Sigmoid colon (tissue), 7 donors: ENCODE measurements at regions of chr1 and their contacts with region 1.

Region 1: DNA sequence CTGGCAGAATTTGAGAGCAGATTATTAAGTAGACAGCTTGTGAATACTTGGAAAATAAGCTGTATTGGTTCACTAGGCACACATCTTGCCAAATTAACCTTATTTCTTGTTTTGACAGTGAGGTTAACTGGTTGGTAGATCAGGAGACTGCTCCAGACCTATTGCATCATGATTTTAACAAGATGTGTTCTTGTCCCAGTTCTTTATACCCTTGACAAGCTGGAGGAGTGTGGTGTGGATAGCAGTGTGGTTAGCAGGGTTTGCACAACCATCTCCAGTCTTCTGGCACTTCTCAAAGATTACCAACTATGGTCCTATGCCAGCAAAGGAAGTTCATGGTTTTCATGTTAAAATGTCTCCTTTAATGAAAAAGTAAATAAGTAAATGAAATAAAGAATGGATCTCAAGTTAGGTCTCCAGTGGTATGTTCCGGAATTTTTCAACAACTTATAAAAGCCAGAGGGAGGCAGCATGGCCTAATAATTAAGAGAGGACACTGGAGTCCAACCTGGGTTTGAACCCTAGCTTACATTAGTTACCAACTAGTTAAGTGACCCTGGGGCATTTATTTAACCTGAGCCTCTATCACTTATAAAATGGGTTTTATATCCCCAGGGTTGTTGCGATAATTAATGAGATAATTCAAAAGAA is 34.1 kb downstream of the DDX20 start:
- DNase-seq: no peak
- H3K4me3 ChIP-seq: no peak overlapping the region
- H3K27ac ChIP-seq: peak overlapping the region in 3 of 4 donors; percentile 26 to 43 (median 36)
- H3K4me1 ChIP-seq: peaks cover 0 to 9% (median 0%) of the 10 kb centered on the region in 4 donors
- H3K27me3 ChIP-seq: no peaks in the 10 kb centered on the region
- CTCF ChIP-seq: peak in 1 of 4 experiments; percentile 35
- EP300 ChIP-seq: peak in 1 of 4 donors; percentile 6
- POLR2A ChIP-seq: no peak

Region 2: DNA sequence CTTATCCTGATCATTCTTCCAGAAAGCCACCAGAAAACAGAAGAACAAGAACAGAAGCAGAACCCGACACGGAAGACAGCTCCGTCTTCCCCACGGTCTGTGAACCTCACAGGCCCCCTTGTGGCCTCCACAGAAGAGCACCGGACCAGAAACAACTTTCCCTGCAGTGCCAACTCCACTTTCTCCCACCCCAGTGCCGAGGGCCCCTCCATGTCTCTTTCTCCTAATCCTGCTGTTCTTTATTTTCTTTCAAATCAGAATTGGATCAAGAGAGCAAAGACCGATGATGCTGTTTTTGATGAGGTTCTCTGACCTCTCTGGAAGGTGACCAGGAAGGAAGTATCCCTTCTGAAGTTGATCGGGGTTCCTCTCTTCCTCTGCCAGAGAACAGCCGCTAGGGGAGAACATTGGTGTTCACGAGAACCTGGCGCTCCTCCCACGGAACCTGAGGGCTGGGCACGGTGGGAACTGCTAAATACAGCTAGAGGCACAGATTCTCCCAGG is 547.3 kb after region 1 on chr1:
- intact Hi-C with region 1: loop called (anchors 2 kb)
- DNase-seq: peak; percentile 75
- H3K4me3 ChIP-seq: no peak overlapping the region
- H3K27ac ChIP-seq: no peak overlapping the region
- H3K4me1 ChIP-seq: no peaks in the 10 kb centered on the region
- H3K27me3 ChIP-seq: no peaks in the 10 kb centered on the region
- CTCF ChIP-seq: peak in 3 of 4 experiments; percentile 48 to 63 (median 56)
- EP300 ChIP-seq: no peak
- POLR2A ChIP-seq: no peak

Region 3: GRCh38 chr1:112369392-112370285 is 579.8 kb after region 1 on chr1:
- intact Hi-C with region 1: loop called (anchors 2 kb)
- DNase-seq: peak; percentile 92
- H3K4me3 ChIP-seq: no peak overlapping the region
- H3K27ac ChIP-seq: no peak overlapping the region
- H3K4me1 ChIP-seq: peaks cover 0 to 9% (median 0%) of the 10 kb centered on the region in 4 donors
- H3K27me3 ChIP-seq: no peaks in the 10 kb centered on the region
- CTCF ChIP-seq: peak; percentile 84 to 96 (median 94)
- EP300 ChIP-seq: no peak
- POLR2A ChIP-seq: no peak

Region 4: GRCh38 chr1:113178522-113178921 is 1388.7 kb after region 1 on chr1:
- intact Hi-C with region 1: no loop called
- DNase-seq: no peak
- H3K4me3 ChIP-seq: no peak overlapping the region
- H3K27ac ChIP-seq: no peak overlapping the region
- H3K4me1 ChIP-seq: no peaks in the 10 kb centered on the region
- H3K27me3 ChIP-seq: no peaks in the 10 kb centered on the region
- CTCF ChIP-seq: no peak
- EP300 ChIP-seq: no peak
- POLR2A ChIP-seq: no peak